Dendritic cell treated with granulocyte-macrophage colony-stimulating factor and Interleukin-4, amounts not matched to agents 40 ng/mL and 50 ng/mL, for 4 days (primary cell): ENCODE measurements at regions of chr17 and their contacts with region 1.

Region 1: DNA sequence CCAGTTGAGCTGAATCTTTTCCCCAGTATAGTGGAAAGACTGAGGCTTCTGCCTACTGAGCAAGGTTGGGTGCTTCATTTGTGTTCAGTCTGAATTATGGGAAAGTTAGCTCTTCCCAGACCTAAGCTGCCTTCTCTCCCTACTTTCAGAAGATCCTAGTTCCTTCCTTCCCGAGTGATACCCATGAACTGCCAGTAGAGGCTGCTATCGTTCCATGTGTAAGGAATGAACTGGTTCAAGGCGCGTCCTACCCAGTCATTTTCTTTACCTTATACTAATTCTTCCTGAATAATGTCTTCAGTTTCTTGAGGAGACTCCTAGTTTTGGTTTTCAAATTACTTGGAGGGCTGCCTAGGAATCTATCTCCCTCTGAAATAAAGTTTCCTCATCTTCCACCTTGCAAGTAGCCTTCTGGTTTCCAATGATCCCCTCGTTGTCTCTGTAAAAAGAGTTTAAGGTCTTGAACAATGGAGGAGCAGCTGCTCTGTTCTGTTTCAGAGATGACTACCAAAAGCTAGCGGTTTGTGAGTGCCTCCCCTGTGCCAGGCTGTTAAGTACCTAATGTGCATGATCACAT is 934 bp upstream of the AOC2 start:
- H3K4me3 Mint-ChIP-seq: no peak overlapping the region
- H3K27ac Mint-ChIP-seq: no peak overlapping the region
- H3K4me1 Mint-ChIP-seq: peaks cover 25% of the 10 kb centered on the region
- H3K27me3 Mint-ChIP-seq: no peaks in the 10 kb centered on the region

Region 2: DNA sequence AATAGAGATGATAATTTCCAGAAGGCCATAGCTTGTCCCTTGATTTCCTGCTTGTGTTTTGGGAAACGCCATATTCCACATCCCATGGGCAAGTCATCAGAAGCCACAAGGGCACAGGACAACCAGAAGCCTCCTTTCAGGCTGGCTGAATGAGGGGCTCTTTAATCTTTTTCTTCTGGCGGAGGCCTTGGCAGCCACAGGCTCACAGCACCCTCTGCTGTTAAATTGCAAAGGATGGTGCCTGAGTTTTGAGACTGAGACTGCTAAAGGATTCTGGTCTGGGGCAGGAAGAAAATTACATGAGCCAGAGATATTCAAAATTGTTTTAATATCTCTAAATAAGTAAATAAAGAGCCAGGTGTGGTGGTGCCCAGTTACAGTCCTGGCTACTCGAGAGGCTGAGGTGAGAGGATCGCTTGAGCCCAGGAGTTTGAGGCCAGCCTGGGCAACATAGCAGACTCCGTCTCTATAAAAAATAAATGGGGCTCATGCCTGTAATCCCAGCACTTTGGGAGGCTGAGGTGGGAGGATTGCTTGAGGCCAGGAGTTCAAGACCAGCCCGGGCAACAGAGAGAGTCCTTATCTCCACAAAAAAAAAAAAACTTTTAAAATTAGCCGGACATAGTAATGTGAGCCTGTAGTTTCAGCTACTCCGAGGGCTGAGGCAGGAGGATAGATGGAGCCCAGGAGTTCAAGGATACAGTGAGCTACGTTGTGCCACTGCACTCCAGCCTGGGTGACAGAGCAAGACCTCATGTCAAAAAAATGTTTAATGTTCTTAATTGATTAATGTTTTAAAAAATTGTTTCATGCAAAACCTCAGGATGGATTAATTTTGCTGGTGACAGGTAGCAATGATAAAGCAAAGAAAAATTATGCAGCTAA is 94.5 kb after region 1 on chr17:
- intact Hi-C with region 1: loop called (anchors 2 kb)
- H3K4me3 Mint-ChIP-seq: no peak overlapping the region
- H3K27ac Mint-ChIP-seq: no peak overlapping the region
- H3K4me1 Mint-ChIP-seq: peaks cover 11% of the 10 kb centered on the region
- H3K27me3 Mint-ChIP-seq: peaks cover 5% of the 10 kb centered on the region

Region 3: GRCh38 chr17:42997984-42998938 is 154.8 kb after region 1 on chr17 and contains the start of gene RPL27:
- intact Hi-C with region 1: loop called (anchors 10 kb)
- H3K4me3 Mint-ChIP-seq: peak within 1 kb of the TSS; percentile 95
- H3K27ac Mint-ChIP-seq: peak within 1 kb of the TSS; percentile 95
- H3K4me1 Mint-ChIP-seq: peaks cover 41% of the 10 kb centered on the region
- H3K27me3 Mint-ChIP-seq: no peaks in the 10 kb centered on the region